ENCODE measurements at regions of chr12 and their contacts with region 1.

Region 1: DNA sequence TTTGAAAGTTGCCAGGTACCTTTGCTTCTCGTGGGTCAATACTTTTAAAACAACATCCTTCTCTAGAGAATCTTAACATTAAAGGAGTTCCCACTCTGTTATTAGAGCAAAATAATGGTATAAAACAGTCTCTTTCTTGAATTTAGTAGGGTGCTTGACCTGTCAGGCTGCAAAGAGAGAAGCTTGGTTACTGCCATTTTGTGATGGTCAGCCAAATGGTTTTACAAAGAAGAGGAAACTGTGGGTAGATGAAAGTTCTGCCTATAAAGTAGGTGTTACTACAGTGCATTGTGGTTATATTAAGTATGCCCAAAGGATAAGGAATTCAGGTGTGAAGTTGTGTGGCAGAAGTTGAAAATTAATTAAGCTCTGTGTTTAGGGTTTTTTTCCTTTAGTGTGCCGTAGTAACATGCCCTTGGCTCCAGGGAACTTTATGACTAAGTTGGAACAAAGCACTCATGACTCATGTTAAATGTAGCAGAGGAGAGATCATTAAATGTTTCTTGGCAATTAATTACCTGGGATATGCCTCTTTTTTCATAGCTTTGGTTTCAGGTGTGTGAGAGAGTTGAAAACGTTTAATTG is 354.0 kb upstream of the KITLG start:
- DNase-seq: peak; percentile 98
- ATAC-seq: peak; percentile 73
- H3K4me3 ChIP-seq: no peak overlapping the region
- H3K27ac ChIP-seq: peak overlapping the region; percentile 98
- H3K4me1 ChIP-seq: peaks cover 78 to 90% of the 10 kb centered on the region in 2 experiments
- H3K27me3 ChIP-seq: no peaks in the 10 kb centered on the region
- CTCF ChIP-seq: no peak
- POLR2A ChIP-seq: no peak
- RAD21 ChIP-seq: peak; percentile 52

Region 2: DNA sequence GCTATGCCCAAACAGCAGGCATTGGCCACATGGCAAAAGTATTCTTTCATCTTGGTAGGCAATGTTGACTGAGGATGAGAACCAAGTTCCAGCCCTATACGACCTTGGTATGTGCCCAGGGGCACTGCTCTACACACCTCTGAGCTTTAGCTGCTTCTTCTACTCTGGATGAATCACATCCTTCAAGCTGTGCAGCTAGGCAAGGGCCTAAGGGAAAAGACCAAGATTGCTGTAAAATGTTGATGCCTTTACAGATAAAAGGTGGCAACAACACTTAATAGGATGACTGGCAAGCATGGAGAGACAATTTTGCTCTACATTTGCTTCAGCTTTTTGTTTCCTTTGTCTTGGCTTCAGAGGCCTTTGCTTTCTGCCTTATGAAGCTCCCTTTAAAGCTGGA is 170.7 kb before region 1 on chr12:
- CTCF ChIA-PET with region 1: no interaction called
- POLR2A ChIA-PET with region 1: no interaction called
- RAD21 ChIA-PET with region 1: no interaction called
- intact Hi-C with region 1: no loop called
- DNase-seq: no peak
- ATAC-seq: 0 out of 2 replicates have a peak, but pooled peaks have one; percentile 25
- H3K4me3 ChIP-seq: no peak overlapping the region
- H3K27ac ChIP-seq: no peak overlapping the region
- H3K4me1 ChIP-seq: peaks cover 0 to 2% of the 10 kb centered on the region in 2 experiments; a peak in 1 of 4 replicates
- H3K27me3 ChIP-seq: no peaks in the 10 kb centered on the region
- CTCF ChIP-seq: no peak
- POLR2A ChIP-seq: no peak
- RAD21 ChIP-seq: no peak

Region 3: GRCh38 chr12:88922816-88923215 is 11.4 kb before region 1 on chr12:
- CTCF ChIA-PET with region 1: interaction called, 4 read pairs
- POLR2A ChIA-PET with region 1: interaction called, 24 read pairs
- RAD21 ChIA-PET with region 1: interaction called in 1 of 2 experiments, 3 read pairs
- intact Hi-C with region 1: no loop called
- DNase-seq: no peak
- ATAC-seq: no peak
- H3K4me3 ChIP-seq: peak overlapping the region in 1 of 2 experiments; percentile 2; a peak in 1 of 4 replicates
- H3K27ac ChIP-seq: peak overlapping the region; percentile 98
- H3K4me1 ChIP-seq: peaks cover 87 to 94% of the 10 kb centered on the region in 2 experiments
- H3K27me3 ChIP-seq: no peaks in the 10 kb centered on the region
- CTCF ChIP-seq: no peak
- POLR2A ChIP-seq: no peak
- RAD21 ChIP-seq: no peak

Region 4: GRCh38 chr12:88946372-88946997 is 12.2 kb after region 1 on chr12:
- CTCF ChIA-PET with region 1: interaction called, 36 read pairs
- POLR2A ChIA-PET with region 1: interaction called, 86 read pairs
- RAD21 ChIA-PET with region 1: interaction called in 1 of 2 experiments, 3 read pairs
- intact Hi-C with region 1: no loop called
- DNase-seq: peak; percentile 64
- ATAC-seq: peak; percentile 73
- H3K4me3 ChIP-seq: no peak overlapping the region
- H3K27ac ChIP-seq: peak overlapping the region; percentile 87
- H3K4me1 ChIP-seq: peaks cover 84 to 88% of the 10 kb centered on the region in 2 experiments
- H3K27me3 ChIP-seq: no peaks in the 10 kb centered on the region
- CTCF ChIP-seq: peak in 2 of 3 experiments; percentile 42 to 50; a peak in 4 of 6 replicates
- POLR2A ChIP-seq: no peak
- RAD21 ChIP-seq: no peak

Region 5: GRCh38 chr12:88960213-88960878 is 26.1 kb after region 1 on chr12:
- CTCF ChIA-PET with region 1: no interaction called
- POLR2A ChIA-PET with region 1: interaction called, 15 read pairs
- RAD21 ChIA-PET with region 1: interaction called, 3 to 6 read pairs
- intact Hi-C with region 1: no loop called
- DNase-seq: peak; percentile 91
- ATAC-seq: peak; percentile 85
- H3K4me3 ChIP-seq: peak overlapping the region in 1 of 2 experiments; percentile 8; a peak in 1 of 4 replicates
- H3K27ac ChIP-seq: peak overlapping the region; percentile 97
- H3K4me1 ChIP-seq: peaks cover 69 to 87% of the 10 kb centered on the region in 2 experiments
- H3K27me3 ChIP-seq: no peaks in the 10 kb centered on the region
- CTCF ChIP-seq: no peak
- POLR2A ChIP-seq: no peak
- RAD21 ChIP-seq: peak; percentile 29; the same call in 1 of the 2 replicates

Measured in HCT116 (cell line).